PC-3 (cell line): ENCODE measurements at regions of chr13 and their contacts with region 1.

Region 1: GRCh38 chr13:69324090-69324886 is 783.3 kb upstream of the ATXN8OS start:
- DNase-seq: peak; percentile 42
- ATAC-seq: peak; percentile 31; the same call in 1 of the 2 replicates
- H3K4me3 ChIP-seq: no peak overlapping the region
- H3K27ac ChIP-seq: no peak overlapping the region
- H3K4me1 ChIP-seq: no peaks in the 10 kb centered on the region
- H3K27me3 ChIP-seq: no peaks in the 10 kb centered on the region
- CTCF ChIP-seq: peak; percentile 51

Region 2: GRCh38 chr13:68810660-68811059 is 513.6 kb before region 1 on chr13:
- CTCF ChIA-PET with region 1: no interaction called
- POLR2A ChIA-PET with region 1: no interaction called
- intact Hi-C with region 1: loop called (anchors 1 kb)
- DNase-seq: peak; percentile 6
- ATAC-seq: peak; percentile 86
- H3K4me3 ChIP-seq: no peak overlapping the region
- H3K27ac ChIP-seq: no peak overlapping the region
- H3K4me1 ChIP-seq: peaks cover 7% of the 10 kb centered on the region; the same call in 1 of the 2 replicates
- H3K27me3 ChIP-seq: no peaks in the 10 kb centered on the region
- CTCF ChIP-seq: peak; percentile 48; the same call in 1 of the 2 replicates

Region 3: GRCh38 chr13:69524459-69525155 is 200.3 kb after region 1 on chr13:
- CTCF ChIA-PET with region 1: no interaction called
- POLR2A ChIA-PET with region 1: no interaction called
- intact Hi-C with region 1: loop called (anchors 10 kb)
- DNase-seq: peak; percentile 23
- ATAC-seq: no peak
- H3K4me3 ChIP-seq: no peak overlapping the region
- H3K27ac ChIP-seq: no peak overlapping the region
- H3K4me1 ChIP-seq: no peaks in the 10 kb centered on the region
- H3K27me3 ChIP-seq: no peaks in the 10 kb centered on the region
- CTCF ChIP-seq: peak; percentile 49